ENCODE measurements at regions of chr4 and their contacts with region 1.

Region 1: DNA sequence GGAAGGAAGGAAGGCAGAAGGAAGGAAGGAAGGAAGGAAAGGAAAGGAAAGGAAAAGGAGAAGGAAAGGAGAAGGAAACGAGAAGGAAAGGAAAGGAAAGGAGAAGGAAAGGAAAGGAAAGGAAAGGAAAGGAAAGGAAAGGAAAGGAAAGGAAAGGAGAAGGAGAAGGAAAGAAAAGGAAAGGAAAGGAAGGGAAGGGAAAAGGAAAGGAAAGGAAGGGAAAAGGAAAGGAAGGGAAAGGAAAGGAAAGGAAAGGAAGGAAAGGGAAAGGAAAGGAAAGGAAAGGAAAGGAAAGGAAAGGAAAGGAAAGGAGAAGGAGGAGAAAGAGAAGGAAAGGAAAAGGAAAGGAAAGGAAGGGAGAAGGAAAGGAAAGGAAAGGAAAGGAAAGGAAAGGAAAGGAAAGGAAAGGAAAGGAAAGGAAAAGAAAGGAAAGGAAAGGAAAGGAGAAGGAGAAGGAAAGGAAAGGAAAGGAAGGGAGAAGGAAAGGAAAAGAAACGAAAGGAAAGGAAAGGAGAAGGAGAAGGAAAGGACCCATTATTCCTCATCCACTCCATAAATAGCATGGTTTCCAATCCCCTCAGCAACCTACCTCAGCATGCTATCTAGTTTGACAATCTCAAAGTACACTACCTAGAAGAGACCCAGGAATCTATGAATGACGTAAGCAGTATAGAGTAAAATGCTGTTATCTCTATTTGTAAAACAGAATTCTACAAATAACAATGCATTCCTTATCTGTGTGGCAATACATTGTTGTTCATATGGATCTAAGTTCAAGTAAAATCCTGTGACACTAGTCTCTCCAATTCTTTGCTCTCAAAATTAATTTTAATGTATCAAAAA is 209.7 kb downstream of the LRBA start:
- DNase-seq: peak in 1 of 2 experiments; percentile 24
- H3K4me3 ChIP-seq: no peak overlapping the region
- H3K4me3 Mint-ChIP-seq: peak overlapping the region; percentile 50
- H3K27ac Mint-ChIP-seq: peak overlapping the region; percentile 89
- H3K4me1 ChIP-seq: peaks cover 20% of the 10 kb centered on the region
- H3K4me1 Mint-ChIP-seq: peaks cover 23% of the 10 kb centered on the region
- H3K27me3 ChIP-seq: no peaks in the 10 kb centered on the region
- H3K27me3 Mint-ChIP-seq: no peaks in the 10 kb centered on the region
- CTCF ChIP-seq: no peak

Region 2: DNA sequence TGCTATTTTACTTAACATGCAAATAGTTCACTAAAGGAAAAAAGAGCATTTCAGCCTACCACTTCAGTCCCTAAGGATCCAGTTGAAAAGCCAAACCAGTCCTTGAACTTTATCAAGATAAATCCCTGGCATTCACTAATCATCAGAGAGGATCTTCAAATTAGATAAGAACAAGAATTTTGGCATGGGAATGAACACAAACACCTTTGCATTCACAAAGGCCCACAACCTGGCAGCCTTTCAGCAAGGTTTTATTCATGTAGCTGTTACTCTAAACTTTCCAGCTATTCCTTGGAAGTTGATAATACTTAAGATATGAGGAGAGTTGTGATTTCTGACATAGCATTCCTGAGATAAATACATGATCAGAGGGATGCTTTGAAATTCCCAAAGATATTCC is 16.2 kb after region 1 on chr4:
- CTCF ChIA-PET with region 1: no interaction called
- POLR2A ChIA-PET with region 1: no interaction called
- intact Hi-C with region 1: loop called (anchors 1 kb)
- DNase-seq: peak; percentile 31 to 71
- H3K4me3 ChIP-seq: no peak overlapping the region
- H3K4me3 Mint-ChIP-seq: peak overlapping the region; percentile 51
- H3K27ac Mint-ChIP-seq: no peak overlapping the region
- H3K4me1 ChIP-seq: peaks cover 44% of the 10 kb centered on the region
- H3K4me1 Mint-ChIP-seq: peaks cover 23% of the 10 kb centered on the region
- H3K27me3 ChIP-seq: no peaks in the 10 kb centered on the region
- H3K27me3 Mint-ChIP-seq: no peaks in the 10 kb centered on the region
- CTCF ChIP-seq: no peak

Region 3: DNA sequence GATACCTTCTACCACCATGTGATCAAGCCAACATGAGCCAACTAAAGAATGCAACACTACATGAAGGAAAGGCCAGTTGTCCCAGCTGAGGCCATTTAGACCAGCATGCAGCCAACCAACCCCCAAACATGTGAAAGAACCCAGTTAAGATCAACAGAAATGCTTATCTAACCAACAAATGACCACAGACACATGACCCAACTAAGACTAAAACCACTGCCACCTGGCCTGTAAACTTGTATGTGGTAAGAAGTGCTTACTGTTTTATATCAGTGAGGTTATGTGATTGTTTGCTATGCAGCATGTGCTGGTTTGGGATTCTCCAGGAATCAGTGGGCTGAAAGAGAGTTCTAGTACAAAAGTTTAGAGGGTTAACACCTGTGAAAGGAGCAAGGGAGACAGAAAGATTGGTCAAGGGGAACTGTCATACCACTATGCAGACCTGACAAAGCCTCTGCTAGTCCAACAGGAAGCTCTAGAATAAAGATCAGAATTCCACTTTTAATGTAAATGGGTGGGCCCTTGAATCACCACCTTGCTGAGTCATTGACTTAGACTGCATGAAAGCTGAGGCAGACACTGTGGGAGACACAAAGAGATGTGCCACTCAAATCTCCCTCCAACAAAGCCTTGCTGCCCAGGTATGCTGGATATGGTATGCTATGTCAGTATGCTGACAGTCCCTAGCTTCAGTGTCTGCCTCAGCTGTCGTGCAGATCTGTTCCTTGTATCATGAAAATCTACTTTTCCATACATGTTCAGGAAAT is 526.1 kb after region 1 on chr4:
- CTCF ChIA-PET with region 1: no interaction called
- POLR2A ChIA-PET with region 1: no interaction called
- intact Hi-C with region 1: no loop called
- DNase-seq: no peak
- H3K4me3 ChIP-seq: no peak overlapping the region
- H3K4me3 Mint-ChIP-seq: no peak overlapping the region
- H3K27ac Mint-ChIP-seq: no peak overlapping the region
- H3K4me1 ChIP-seq: 0 out of 2 replicates have a peak, but pooled peaks cover 4% of the 10 kb centered on the region
- H3K4me1 Mint-ChIP-seq: peaks cover 6% of the 10 kb centered on the region
- H3K27me3 ChIP-seq: no peaks in the 10 kb centered on the region
- H3K27me3 Mint-ChIP-seq: no peaks in the 10 kb centered on the region
- CTCF ChIP-seq: no peak

Region 4: DNA sequence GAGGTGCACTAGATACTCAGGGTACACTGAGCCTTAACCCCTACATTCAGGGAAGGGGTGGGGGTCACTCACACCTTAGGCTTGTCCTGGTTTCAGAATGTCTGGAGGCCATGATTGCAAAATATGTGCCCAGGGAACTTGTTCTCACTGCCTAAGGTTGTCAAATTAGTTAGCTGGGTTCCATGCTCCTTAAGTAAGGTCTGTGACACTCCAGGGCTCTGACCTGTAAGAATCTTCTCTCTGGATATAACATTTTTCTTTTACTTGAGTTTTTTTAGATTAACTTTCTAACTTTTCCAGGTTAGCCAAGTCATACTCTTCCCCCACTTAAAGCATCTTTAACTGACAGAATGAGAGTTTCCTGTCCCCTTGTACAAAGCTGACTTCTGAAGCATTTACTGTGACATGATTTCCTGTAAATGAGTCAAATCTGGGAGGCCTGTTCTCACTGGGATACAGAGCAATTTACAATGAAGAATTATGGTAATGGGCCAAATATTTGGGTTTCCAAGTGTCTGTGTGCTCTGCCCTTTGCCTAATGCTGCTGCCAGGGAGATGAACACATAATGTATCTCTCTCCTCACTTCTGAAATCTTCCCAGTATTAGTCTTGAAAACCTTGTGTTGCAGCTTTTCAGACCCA is 853.7 kb after region 1 on chr4:
- CTCF ChIA-PET with region 1: no interaction called
- POLR2A ChIA-PET with region 1: no interaction called
- intact Hi-C with region 1: no loop called
- DNase-seq: no peak
- H3K4me3 ChIP-seq: no peak overlapping the region
- H3K4me3 Mint-ChIP-seq: no peak overlapping the region
- H3K27ac Mint-ChIP-seq: no peak overlapping the region
- H3K4me1 ChIP-seq: no peaks in the 10 kb centered on the region
- H3K4me1 Mint-ChIP-seq: no peaks in the 10 kb centered on the region
- H3K27me3 ChIP-seq: no peaks in the 10 kb centered on the region
- H3K27me3 Mint-ChIP-seq: no peaks in the 10 kb centered on the region
- CTCF ChIP-seq: no peak